MCF 10A (cell line): ENCODE measurements at regions of chr1 and their contacts with region 1.

Region 1: DNA sequence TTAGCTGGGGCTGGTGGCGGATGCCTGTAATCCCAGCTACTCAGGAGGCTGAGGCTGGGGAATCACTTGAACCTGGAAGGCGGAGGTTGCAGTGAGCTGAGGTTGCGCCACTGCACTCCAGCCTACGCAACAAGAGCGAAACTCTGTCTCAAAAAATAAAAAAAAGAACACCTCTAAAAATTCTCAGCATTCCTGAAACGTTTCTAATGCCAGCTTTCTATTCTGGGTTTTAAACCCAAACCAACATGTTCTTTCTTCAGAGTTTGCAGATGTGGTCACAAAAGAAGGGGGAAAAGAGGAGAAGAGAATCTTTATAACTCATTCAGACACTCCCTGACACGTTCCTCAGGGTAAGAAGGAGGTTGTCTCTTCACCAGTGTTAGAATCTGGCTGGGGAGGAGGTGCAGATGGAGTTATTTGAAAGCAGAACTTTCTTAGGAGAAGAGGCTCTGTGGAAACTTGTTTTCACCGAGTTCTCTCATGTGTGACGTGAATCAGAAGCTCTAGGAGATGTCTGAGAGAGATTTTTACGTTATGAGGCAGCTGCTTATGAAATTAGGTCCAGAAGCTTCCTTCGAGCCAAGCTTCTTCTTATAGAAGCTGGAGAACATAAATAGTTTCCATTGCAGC is 17.8 kb upstream of the CNR2 start:
- DNase-seq: peak; percentile 42
- H3K4me3 Mint-ChIP-seq: peak overlapping the region; percentile 62
- H3K27ac Mint-ChIP-seq: peak overlapping the region; percentile 84
- H3K4me1 Mint-ChIP-seq: peaks cover 6% of the 10 kb centered on the region
- H3K27me3 Mint-ChIP-seq: no peaks in the 10 kb centered on the region
- CTCF ChIP-seq: no peak

Region 2: DNA sequence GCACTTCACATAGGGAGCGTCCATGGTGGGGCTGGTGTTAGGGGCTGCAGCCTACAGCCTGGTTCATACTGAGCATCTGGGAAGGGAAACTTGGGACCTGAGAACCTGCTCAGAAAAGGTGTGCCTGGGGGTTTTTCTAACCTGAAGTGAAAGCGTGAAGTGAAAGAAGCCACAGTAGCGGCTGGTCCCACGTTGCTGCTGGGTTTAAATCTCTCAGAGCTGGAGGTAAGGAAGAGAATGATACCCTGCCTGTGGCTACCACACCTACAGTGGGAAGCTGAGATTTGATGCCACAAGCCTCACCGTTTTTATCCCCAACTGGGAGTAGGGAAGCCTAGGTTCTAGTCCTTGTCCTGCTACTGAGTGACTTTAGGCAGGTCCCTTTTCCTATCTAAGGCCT is 41.9 kb before region 1 on chr1:
- CTCF ChIA-PET with region 1: no interaction called
- POLR2A ChIA-PET with region 1: no interaction called
- intact Hi-C with region 1: no loop called
- DNase-seq: no peak
- H3K4me3 Mint-ChIP-seq: no peak overlapping the region
- H3K27ac Mint-ChIP-seq: no peak overlapping the region
- H3K4me1 Mint-ChIP-seq: no peaks in the 10 kb centered on the region
- H3K27me3 Mint-ChIP-seq: peaks cover 11% of the 10 kb centered on the region
- CTCF ChIP-seq: no peak

Region 3: DNA sequence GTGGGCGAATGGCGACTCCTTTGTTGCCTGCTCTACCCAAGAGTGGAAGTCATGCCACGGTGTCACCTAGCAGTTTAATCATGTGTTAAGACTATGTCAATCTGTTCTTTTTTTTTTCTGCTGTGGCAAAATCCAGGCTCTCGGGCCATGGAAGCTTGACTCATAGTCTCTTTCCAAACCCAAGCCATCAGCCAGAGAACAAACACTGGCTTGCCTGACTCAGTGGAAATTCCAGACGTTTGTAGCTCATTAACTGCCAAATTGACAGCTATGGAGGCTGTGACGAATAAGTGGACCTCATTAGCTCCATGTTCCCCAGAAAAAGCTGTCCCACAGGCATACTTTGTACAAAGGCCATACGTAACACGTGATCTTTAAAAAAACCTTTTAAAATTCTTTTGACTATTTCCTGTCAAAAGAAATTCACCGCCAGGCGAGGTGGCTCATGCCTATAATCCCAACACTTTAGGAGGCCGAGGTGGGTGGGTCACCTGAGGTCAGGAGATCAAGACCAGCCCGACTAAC is 20.7 kb after region 1 on chr1:
- CTCF ChIA-PET with region 1: interaction called, 11 read pairs
- POLR2A ChIA-PET with region 1: interaction called, 24 read pairs
- intact Hi-C with region 1: no loop called
- DNase-seq: peak; percentile 95
- H3K4me3 Mint-ChIP-seq: peak overlapping the region; percentile 23
- H3K27ac Mint-ChIP-seq: peak overlapping the region; percentile 90
- H3K4me1 Mint-ChIP-seq: peaks cover 37% of the 10 kb centered on the region
- H3K27me3 Mint-ChIP-seq: no peaks in the 10 kb centered on the region
- CTCF ChIP-seq: no peak

Region 4: DNA sequence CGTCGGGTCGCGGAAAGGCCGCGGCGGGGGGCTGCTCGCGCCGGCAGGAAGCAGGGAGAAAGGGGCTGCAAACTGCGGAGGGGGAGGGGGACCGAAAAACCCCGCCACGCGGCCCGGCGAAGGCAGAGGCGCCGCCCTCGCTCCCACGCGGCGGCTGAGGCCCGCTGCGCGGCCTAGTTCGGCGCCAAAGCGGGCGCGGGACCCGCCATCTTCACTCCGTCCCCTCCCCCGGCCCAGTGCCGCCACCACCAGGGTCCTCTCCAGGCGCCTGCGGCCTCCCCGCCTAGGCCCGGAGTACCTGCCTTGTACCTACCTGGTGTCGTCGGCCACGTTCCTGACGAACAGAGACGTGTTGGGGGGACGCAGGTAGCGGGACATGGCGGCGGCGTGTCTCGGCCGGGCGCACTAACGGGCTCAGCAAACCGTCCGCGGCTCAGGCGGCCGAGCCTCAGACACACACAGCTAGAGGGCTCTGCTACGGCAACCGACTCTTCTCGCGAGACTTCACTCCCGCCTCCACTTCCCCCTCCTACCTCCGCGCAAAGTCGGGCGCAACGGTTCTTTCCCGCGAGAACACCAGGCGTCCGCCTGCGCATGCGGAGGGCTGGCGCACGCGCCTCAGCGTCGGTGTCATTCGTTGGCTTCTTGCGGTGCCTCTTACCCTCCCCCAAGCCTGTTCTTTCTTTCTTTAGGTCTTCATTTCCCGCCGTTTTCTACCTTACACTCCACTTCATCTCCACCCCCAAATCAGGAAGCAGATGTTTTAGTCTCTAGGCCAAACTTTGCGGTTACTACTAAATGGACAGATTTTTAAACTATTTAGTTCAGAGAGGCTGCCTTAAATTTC is 49.1 kb after region 1 on chr1 and contains the start of gene SRSF10:
- CTCF ChIA-PET with region 1: no interaction called
- POLR2A ChIA-PET with region 1: no interaction called
- intact Hi-C with region 1: no loop called
- DNase-seq: peak; percentile 98
- H3K4me3 Mint-ChIP-seq: peak within 1 kb of the TSS; percentile 91
- H3K27ac Mint-ChIP-seq: peak within 1 kb of the TSS; percentile 95
- H3K4me1 Mint-ChIP-seq: peaks cover 38% of the 10 kb centered on the region
- H3K27me3 Mint-ChIP-seq: no peaks in the 10 kb centered on the region
- CTCF ChIP-seq: no peak
- total RNA-seq, gene SRSF10: 121 and 134 TPM in 2 replicates